ENCODE measurements at regions of chr17 and their contacts with region 1.

Region 1: GRCh38 chr17:48928876-48929811 is 15.5 kb downstream of the SNF8 start:
- DNase-seq: no peak
- H3K4me3 ChIP-seq: no peak overlapping the region
- H3K27ac ChIP-seq: no peak overlapping the region
- H3K4me1 ChIP-seq: no peaks in the 10 kb centered on the region
- H3K27me3 ChIP-seq: no peaks in the 10 kb centered on the region
- CTCF ChIP-seq: no peak
- EP300 ChIP-seq: no peak
- POLR2A ChIP-seq: no peak; a peak in 1 of 3 replicates
- RAD21 ChIP-seq: no peak

Region 2: DNA sequence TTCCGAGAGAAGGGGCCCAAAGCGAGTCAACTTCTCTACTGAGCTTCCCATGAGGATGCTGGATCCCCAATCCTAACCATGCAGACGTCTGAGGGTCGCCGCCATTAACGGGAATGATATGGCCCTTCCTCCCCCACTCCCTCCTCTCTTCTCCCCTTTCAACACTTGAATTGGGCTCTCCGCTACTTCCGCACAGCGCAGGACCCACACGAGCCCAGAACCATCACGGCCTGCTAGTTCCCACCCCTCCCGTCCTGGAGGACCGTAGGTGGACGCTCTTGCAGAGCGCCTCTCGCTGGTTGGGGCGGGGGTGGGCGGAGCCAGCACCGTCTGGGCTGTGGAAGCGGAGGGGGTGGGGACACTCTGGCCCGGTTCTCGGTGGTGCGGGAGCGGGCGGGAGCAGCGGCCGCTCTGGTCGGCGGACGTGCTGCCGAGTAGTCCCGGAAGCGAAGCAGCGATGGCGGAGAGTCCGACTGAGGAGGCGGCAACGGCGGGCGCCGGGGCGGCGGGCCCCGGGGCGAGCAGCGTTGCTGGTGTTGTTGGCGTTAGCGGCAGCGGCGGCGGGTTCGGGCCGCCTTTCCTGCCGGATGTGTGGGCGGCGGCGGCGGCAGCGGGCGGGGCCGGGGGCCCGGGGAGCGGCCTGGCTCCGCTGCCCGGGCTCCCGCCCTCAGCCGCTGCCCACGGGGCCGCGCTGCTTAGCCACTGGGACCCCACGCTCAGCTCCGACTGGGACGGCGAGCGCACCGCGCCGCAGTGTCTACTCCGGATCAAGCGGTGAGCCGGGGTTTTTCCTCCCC is 20.9 kb before region 1 on chr17 and contains the start of gene UBE2Z:
- CTCF ChIA-PET with region 1: interaction called, 3 read pairs
- POLR2A ChIA-PET with region 1: interaction called, 20 read pairs
- DNase-seq: peak; percentile 88 to 94
- H3K4me3 ChIP-seq: peak within 1 kb of the TSS; percentile 74 to 97 (median 80)
- H3K27ac ChIP-seq: peak within 1 kb of the TSS; percentile 89
- H3K4me1 ChIP-seq: peaks cover 5 to 17% (median 6%) of the 10 kb centered on the region in 4 experiments
- H3K27me3 ChIP-seq: no peaks in the 10 kb centered on the region
- CTCF ChIP-seq: peak; percentile 31 to 52 (median 39)
- EP300 ChIP-seq: no peak
- POLR2A ChIP-seq: peak; percentile 84 to 90
- RAD21 ChIP-seq: 0 out of 4 replicates have a peak, but pooled peaks of 1 of the 2 experiments have one; percentile 5
- total RNA-seq, gene UBE2Z: 75.3 and 75.9 TPM in 2 replicates

Region 3: GRCh38 chr17:48915459-48916282 is 13.5 kb before region 1 on chr17:
- CTCF ChIA-PET with region 1: interaction called, 3 read pairs
- POLR2A ChIA-PET with region 1: interaction called, 143 read pairs
- DNase-seq: no peak
- H3K4me3 ChIP-seq: no peak overlapping the region
- H3K27ac ChIP-seq: no peak overlapping the region
- H3K4me1 ChIP-seq: peaks cover 0 to 5% (median 0%) of the 10 kb centered on the region in 4 experiments; a peak in 1 of 7 replicates
- H3K27me3 ChIP-seq: no peaks in the 10 kb centered on the region
- CTCF ChIP-seq: no peak
- EP300 ChIP-seq: no peak
- POLR2A ChIP-seq: no peak
- RAD21 ChIP-seq: no peak

Region 4: GRCh38 chr17:48944519-48945260 is 15.5 kb after region 1 on chr17 and contains the start of gene SNF8:
- CTCF ChIA-PET with region 1: no interaction called
- POLR2A ChIA-PET with region 1: interaction called, 45 read pairs
- DNase-seq: peak; percentile 75 to 98
- H3K4me3 ChIP-seq: peak within 1 kb of the TSS; percentile 64 to 93 (median 88)
- H3K27ac ChIP-seq: peak within 1 kb of the TSS; percentile 95
- H3K4me1 ChIP-seq: peaks cover 3 to 7% (median 4%) of the 10 kb centered on the region in 4 experiments; a peak in 4 of 7 replicates
- H3K27me3 ChIP-seq: no peaks in the 10 kb centered on the region
- CTCF ChIP-seq: no peak
- EP300 ChIP-seq: peak in 1 of 2 experiments; percentile 11; a peak in 1 of 3 replicates
- POLR2A ChIP-seq: peak; percentile 84 to 98
- RAD21 ChIP-seq: peak in 1 of 2 experiments; percentile 3; a peak in 1 of 4 replicates
- total RNA-seq, gene SNF8: 130 and 133 TPM in 2 replicates

Region 5: GRCh38 chr17:49053171-49053829 is 124.2 kb after region 1 on chr17:
- CTCF ChIA-PET with region 1: no interaction called
- POLR2A ChIA-PET with region 1: interaction called, 12 read pairs
- DNase-seq: peak in 1 of 2 experiments; percentile 55
- H3K4me3 ChIP-seq: no peak overlapping the region
- H3K27ac ChIP-seq: no peak overlapping the region
- H3K4me1 ChIP-seq: peaks cover 10 to 23% (median 19%) of the 10 kb centered on the region in 4 experiments
- H3K27me3 ChIP-seq: no peaks in the 10 kb centered on the region
- CTCF ChIP-seq: no peak
- EP300 ChIP-seq: no peak
- POLR2A ChIP-seq: peak; percentile 34 to 58; a peak in 2 of 3 replicates
- RAD21 ChIP-seq: peak in 1 of 2 experiments; percentile 22; a peak in 1 of 4 replicates

Region 6: GRCh38 chr17:49157784-49158183 is 228.6 kb after region 1 on chr17:
- CTCF ChIA-PET with region 1: no interaction called
- POLR2A ChIA-PET with region 1: no interaction called
- DNase-seq: no peak
- H3K4me3 ChIP-seq: no peak overlapping the region
- H3K27ac ChIP-seq: no peak overlapping the region
- H3K4me1 ChIP-seq: no peaks in the 10 kb centered on the region
- H3K27me3 ChIP-seq: no peaks in the 10 kb centered on the region
- CTCF ChIP-seq: no peak
- EP300 ChIP-seq: no peak
- POLR2A ChIP-seq: no peak
- RAD21 ChIP-seq: no peak